ENCODE measurements at regions of chr15 and their contacts with region 1.

Region 1: DNA sequence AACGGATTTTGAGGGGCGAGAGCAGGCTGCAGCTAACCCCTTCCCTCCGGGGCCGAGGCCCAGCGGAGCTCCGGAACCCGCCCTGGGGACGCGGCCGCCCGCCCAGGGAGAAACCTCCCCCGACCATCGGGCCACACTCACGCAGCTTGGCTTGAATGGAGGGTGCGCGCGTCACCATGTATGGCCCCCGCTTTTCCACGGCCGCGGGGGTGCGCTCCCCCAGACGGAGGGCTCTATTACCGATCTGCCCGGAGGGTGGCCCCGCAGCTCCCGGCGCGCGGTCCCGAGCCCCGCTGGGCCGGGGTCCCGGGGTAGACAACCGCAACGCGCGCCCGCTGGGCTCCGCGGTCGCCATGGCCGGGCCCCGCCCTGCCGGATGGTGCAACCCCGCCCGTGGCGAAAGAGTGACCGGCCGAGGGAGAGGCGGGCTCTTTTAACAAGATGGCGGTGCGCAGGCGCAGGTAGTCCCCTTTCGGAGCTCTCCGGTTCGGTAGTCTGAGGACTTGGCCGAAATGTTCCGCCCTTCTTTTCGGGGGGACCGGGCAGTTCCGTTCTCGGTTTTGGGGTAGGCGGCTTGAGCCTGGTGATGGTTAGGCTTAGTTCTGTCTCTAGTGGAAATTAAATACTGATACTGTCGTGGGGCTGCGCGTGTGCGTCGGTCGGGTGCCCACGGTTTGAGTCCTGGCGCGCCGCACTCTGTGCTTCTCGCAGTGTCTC is at the start of gene FAM219B:
- DNase-seq: peak; percentile 47
- ATAC-seq: peak; percentile 98
- H3K4me3 ChIP-seq: peak within 1 kb of the TSS; percentile 97
- H3K27ac ChIP-seq: peak within 1 kb of the TSS; percentile 76
- H3K4me1 ChIP-seq: peaks cover 6% of the 10 kb centered on the region
- H3K27me3 ChIP-seq: no peaks in the 10 kb centered on the region
- CTCF ChIP-seq: 0 out of 6 replicates have a peak, but pooled peaks of 1 of the 3 experiments have one; percentile 1
- EP300 ChIP-seq: no peak
- POLR2A ChIP-seq: peak; percentile 82
- RAD21 ChIP-seq: no peak
- polyA plus RNA-seq, gene FAM219B: 7.6 to 8.9 TPM

Region 2: DNA sequence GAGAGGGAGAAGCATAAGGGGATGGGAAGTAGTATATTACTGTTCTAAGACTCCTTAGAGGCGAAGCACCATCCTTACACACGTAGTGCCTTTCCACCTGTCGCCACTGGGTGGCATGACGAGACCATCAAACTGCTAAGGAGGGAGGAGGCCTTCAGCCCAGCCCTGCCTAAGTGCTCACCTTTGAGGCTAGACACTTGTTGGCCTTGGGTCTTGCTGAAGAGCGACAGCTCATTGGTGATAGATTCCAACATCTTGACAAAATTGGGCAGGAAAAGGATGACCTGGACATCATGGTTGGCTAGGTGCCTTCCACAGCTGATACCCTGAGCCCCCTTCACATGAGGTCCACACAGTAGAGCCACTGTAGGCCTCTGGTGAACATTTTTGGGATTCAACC is 271.4 kb before region 1 on chr15:
- CTCF ChIA-PET with region 1: interaction called, 10 read pairs
- POLR2A ChIA-PET with region 1: no interaction called
- RAD21 ChIA-PET with region 1: interaction called, 4 read pairs
- SMC1A ChIA-PET with region 1: no interaction called
- in situ Hi-C with region 1: no loop called
- intact Hi-C with region 1: no loop called
- DNase-seq: no peak
- ATAC-seq: peak; percentile 91
- H3K4me3 ChIP-seq: no peak overlapping the region
- H3K27ac ChIP-seq: no peak overlapping the region
- H3K4me1 ChIP-seq: no peaks in the 10 kb centered on the region
- H3K27me3 ChIP-seq: no peaks in the 10 kb centered on the region
- CTCF ChIP-seq: peak; percentile 89 to 98 (median 95); a peak in 5 of 6 replicates
- EP300 ChIP-seq: no peak
- POLR2A ChIP-seq: 0 out of 2 replicates have a peak, but pooled peaks have one; percentile 12
- RAD21 ChIP-seq: peak; percentile 95

Region 3: DNA sequence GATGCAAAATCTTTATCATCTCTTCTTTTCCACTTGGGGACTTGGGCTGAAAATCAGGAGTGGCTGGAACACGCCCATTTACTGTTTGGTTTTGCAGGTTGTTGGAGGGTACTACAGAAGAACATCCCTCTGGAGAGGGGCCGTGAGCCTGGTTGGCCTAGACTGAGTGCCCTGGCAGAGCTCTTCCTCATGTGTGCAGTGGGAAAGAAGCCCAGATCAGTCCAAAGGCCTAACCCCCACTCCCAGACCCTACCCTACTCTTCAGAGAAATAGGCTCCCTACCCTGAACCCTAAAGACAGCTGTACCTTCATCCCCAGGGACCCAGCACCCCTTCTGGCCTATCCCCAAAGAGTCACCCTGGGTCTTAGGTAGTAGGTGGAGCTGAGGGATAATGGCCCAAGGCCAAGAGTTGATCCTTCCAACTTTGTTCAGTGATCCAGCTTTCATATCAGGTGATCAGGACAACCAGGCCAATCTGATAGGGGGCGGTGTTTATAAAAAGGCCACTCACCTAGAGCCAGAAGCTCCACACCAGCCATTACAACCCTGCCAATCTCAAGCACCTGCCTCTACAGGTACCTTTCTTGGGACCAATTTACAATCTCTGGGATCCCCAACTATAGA is 158.2 kb before region 1 on chr15 and contains the start of gene CYP1A2:
- CTCF ChIA-PET with region 1: no interaction called
- POLR2A ChIA-PET with region 1: no interaction called
- RAD21 ChIA-PET with region 1: no interaction called
- SMC1A ChIA-PET with region 1: no interaction called
- in situ Hi-C with region 1: no loop called
- intact Hi-C with region 1: no loop called
- DNase-seq: no peak
- ATAC-seq: no peak
- H3K4me3 ChIP-seq: no peak within 1 kb of the TSS
- H3K27ac ChIP-seq: no peak within 1 kb of the TSS
- H3K4me1 ChIP-seq: no peaks in the 10 kb centered on the region
- H3K27me3 ChIP-seq: no peaks in the 10 kb centered on the region
- CTCF ChIP-seq: no peak
- EP300 ChIP-seq: no peak
- POLR2A ChIP-seq: no peak
- RAD21 ChIP-seq: no peak
- polyA plus RNA-seq, gene CYP1A2: not detected

Region 4: DNA sequence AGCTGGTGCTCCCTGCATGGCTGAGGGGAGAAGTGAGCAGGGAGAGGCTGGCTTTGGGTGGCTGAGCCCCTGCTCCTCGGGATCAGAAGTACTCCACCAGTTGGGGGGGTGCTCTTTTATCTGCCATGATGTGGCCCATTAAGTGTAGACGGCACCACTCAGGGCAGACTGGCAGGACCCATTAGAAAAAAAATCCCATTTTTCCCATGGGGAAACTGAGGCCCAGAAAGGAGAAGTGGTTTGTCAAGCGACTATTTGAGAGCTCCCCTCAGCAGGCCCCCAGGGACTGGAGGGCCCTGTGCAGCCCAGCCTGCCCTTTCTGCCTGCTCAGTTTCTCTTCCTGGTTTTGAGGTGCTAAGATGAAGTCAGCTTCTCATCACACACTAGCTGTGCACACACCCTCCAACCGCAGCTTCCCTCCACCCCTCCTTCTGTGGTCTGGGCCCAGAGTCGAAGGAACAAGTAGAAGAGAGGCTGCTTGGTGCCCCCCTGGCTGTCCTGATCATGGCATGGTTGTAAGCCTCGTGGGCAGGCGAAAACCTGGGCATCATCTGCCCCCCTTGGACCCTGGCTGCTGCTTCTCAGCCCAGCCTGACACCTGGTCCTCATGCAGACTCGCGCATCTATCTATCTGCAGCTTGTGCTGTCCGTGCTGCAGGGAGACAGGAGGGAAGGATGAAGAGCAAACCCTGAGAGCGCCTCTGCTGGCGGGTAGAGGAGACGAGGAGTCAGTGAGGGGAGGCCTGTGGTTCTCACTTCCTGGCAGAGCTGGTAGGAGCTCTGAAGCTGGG is 119.2 kb before region 1 on chr15:
- CTCF ChIA-PET with region 1: interaction called, 24 read pairs
- POLR2A ChIA-PET with region 1: interaction called, 5 read pairs
- RAD21 ChIA-PET with region 1: interaction called, 10 read pairs
- SMC1A ChIA-PET with region 1: interaction called, 15 read pairs
- in situ Hi-C with region 1: no loop called
- intact Hi-C with region 1: no loop called
- DNase-seq: peak; percentile 97
- ATAC-seq: peak; percentile 58
- H3K4me3 ChIP-seq: peak overlapping the region; percentile 94
- H3K27ac ChIP-seq: peak overlapping the region; percentile 96
- H3K4me1 ChIP-seq: peaks cover 55% of the 10 kb centered on the region
- H3K27me3 ChIP-seq: no peaks in the 10 kb centered on the region
- CTCF ChIP-seq: peak; percentile 79 to 93 (median 82)
- EP300 ChIP-seq: peak; percentile 83 to 88
- POLR2A ChIP-seq: peak; percentile 76
- RAD21 ChIP-seq: peak; percentile 45; the same call in 1 of the 2 replicates

Region 5: GRCh38 chr15:74808073-74808755 is 98.4 kb before region 1 on chr15:
- CTCF ChIA-PET with region 1: interaction called, 11 read pairs
- POLR2A ChIA-PET with region 1: interaction called, 3 read pairs
- RAD21 ChIA-PET with region 1: interaction called, 10 read pairs
- SMC1A ChIA-PET with region 1: interaction called, 11 read pairs
- in situ Hi-C with region 1: no loop called
- intact Hi-C with region 1: no loop called
- DNase-seq: no peak
- ATAC-seq: peak; percentile 51
- H3K4me3 ChIP-seq: no peak overlapping the region
- H3K27ac ChIP-seq: no peak overlapping the region
- H3K4me1 ChIP-seq: no peaks in the 10 kb centered on the region
- H3K27me3 ChIP-seq: no peaks in the 10 kb centered on the region
- CTCF ChIP-seq: no peak
- EP300 ChIP-seq: no peak
- POLR2A ChIP-seq: peak; percentile 57; the same call in 1 of the 2 replicates
- RAD21 ChIP-seq: no peak

Region 6: GRCh38 chr15:74842581-74843444 is 63.8 kb before region 1 on chr15 and contains the start of gene ULK3:
- CTCF ChIA-PET with region 1: interaction called, 59 read pairs
- POLR2A ChIA-PET with region 1: interaction called, 8 read pairs
- RAD21 ChIA-PET with region 1: interaction called, 19 read pairs
- SMC1A ChIA-PET with region 1: interaction called, 43 read pairs
- in situ Hi-C with region 1: no loop called
- intact Hi-C with region 1: loop called (anchors 5 kb)
- DNase-seq: no peak
- ATAC-seq: peak; percentile 95
- H3K4me3 ChIP-seq: peak within 1 kb of the TSS; percentile 86
- H3K27ac ChIP-seq: peak within 1 kb of the TSS; percentile 80
- H3K4me1 ChIP-seq: peaks cover 13% of the 10 kb centered on the region
- H3K27me3 ChIP-seq: no peaks in the 10 kb centered on the region
- CTCF ChIP-seq: peak; percentile 45 to 60 (median 50); a peak in 5 of 6 replicates
- EP300 ChIP-seq: no peak
- POLR2A ChIP-seq: peak; percentile 75
- RAD21 ChIP-seq: peak; percentile 26
- polyA plus RNA-seq, gene ULK3: 0.64 to 1.4 TPM

Region 7: DNA sequence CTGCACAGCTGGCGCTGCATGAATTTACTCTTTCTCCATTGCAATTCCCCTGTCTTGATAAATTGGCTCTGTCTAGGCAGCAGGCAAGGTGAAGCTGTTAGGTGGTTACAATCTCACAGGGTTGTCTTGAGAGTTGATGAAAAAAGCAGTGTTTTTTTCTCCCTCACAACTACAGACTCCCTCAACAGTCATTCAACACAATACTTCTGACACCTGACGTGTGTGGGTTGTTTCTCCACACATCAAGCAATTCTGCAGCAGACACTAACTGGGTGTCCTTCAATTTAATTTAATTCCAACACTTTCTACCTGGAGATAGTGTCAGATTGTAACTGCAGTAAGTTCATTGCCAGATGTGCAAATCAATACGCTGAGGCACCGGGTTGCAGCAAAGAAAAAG is 28.3 kb before region 1 on chr15:
- CTCF ChIA-PET with region 1: interaction called, 129 read pairs
- POLR2A ChIA-PET with region 1: interaction called, 4 read pairs
- RAD21 ChIA-PET with region 1: interaction called, 17 read pairs
- SMC1A ChIA-PET with region 1: interaction called, 31 read pairs
- in situ Hi-C with region 1: no loop called
- intact Hi-C with region 1: no loop called
- DNase-seq: no peak
- ATAC-seq: no peak
- H3K4me3 ChIP-seq: no peak overlapping the region
- H3K27ac ChIP-seq: no peak overlapping the region
- H3K4me1 ChIP-seq: peaks cover 6% of the 10 kb centered on the region
- H3K27me3 ChIP-seq: no peaks in the 10 kb centered on the region
- CTCF ChIP-seq: no peak
- EP300 ChIP-seq: no peak
- POLR2A ChIP-seq: no peak
- RAD21 ChIP-seq: no peak

Region 8: GRCh38 chr15:74937596-74938296 is 31.1 kb after region 1 on chr15 and contains the start of gene COX5A:
- CTCF ChIA-PET with region 1: interaction called, 19 read pairs
- POLR2A ChIA-PET with region 1: interaction called, 7 read pairs
- RAD21 ChIA-PET with region 1: interaction called, 7 read pairs
- SMC1A ChIA-PET with region 1: interaction called, 9 read pairs
- in situ Hi-C with region 1: no loop called
- intact Hi-C with region 1: no loop called
- DNase-seq: peak; percentile 75
- ATAC-seq: peak; percentile 95
- H3K4me3 ChIP-seq: peak within 1 kb of the TSS; percentile 83
- H3K27ac ChIP-seq: peak within 1 kb of the TSS; percentile 91
- H3K4me1 ChIP-seq: peaks cover 4% of the 10 kb centered on the region
- H3K27me3 ChIP-seq: no peaks in the 10 kb centered on the region
- CTCF ChIP-seq: no peak
- EP300 ChIP-seq: no peak
- POLR2A ChIP-seq: peak; percentile 97
- RAD21 ChIP-seq: no peak
- polyA plus RNA-seq, gene COX5A: 84.5 to 350 TPM

Region 9: GRCh38 chr15:75036314-75036649 is 129.7 kb after region 1 on chr15:
- CTCF ChIA-PET with region 1: no interaction called
- POLR2A ChIA-PET with region 1: no interaction called
- RAD21 ChIA-PET with region 1: no interaction called
- SMC1A ChIA-PET with region 1: no interaction called
- in situ Hi-C with region 1: no loop called
- intact Hi-C with region 1: no loop called
- DNase-seq: no peak
- ATAC-seq: no peak
- H3K4me3 ChIP-seq: no peak overlapping the region
- H3K27ac ChIP-seq: no peak overlapping the region
- H3K4me1 ChIP-seq: peaks cover 24% of the 10 kb centered on the region
- H3K27me3 ChIP-seq: no peaks in the 10 kb centered on the region
- CTCF ChIP-seq: no peak
- EP300 ChIP-seq: no peak
- POLR2A ChIP-seq: no peak
- RAD21 ChIP-seq: no peak

Measured in GM12878 (cell line).